ENCODE measurements at regions of chr6 and their contacts with region 1.

Region 1: GRCh38 chr6:38997128-38997761 is 51.3 kb upstream of the GLP1R start:
- DNase-seq: peak; percentile 30
- H3K4me3 Mint-ChIP-seq: no peak overlapping the region
- H3K27ac Mint-ChIP-seq: no peak overlapping the region
- H3K4me1 Mint-ChIP-seq: no peaks in the 10 kb centered on the region
- H3K27me3 Mint-ChIP-seq: peaks cover 39% of the 10 kb centered on the region
- CTCF ChIP-seq: peak; percentile 29

Region 2: GRCh38 chr6:38901802-38902522 is 95.3 kb before region 1 on chr6:
- CTCF ChIA-PET with region 1: interaction called, 10 read pairs
- POLR2A ChIA-PET with region 1: no interaction called
- intact Hi-C with region 1: no loop called
- DNase-seq: no peak
- H3K4me3 Mint-ChIP-seq: no peak overlapping the region
- H3K27ac Mint-ChIP-seq: no peak overlapping the region
- H3K4me1 Mint-ChIP-seq: no peaks in the 10 kb centered on the region
- H3K27me3 Mint-ChIP-seq: no peaks in the 10 kb centered on the region
- CTCF ChIP-seq: no peak

Region 3: GRCh38 chr6:39008737-39009136 is 11.5 kb after region 1 on chr6:
- CTCF ChIA-PET with region 1: no interaction called
- POLR2A ChIA-PET with region 1: no interaction called
- intact Hi-C with region 1: no loop called
- DNase-seq: no peak
- H3K4me3 Mint-ChIP-seq: no peak overlapping the region
- H3K27ac Mint-ChIP-seq: no peak overlapping the region
- H3K4me1 Mint-ChIP-seq: no peaks in the 10 kb centered on the region
- H3K27me3 Mint-ChIP-seq: peaks cover 86% of the 10 kb centered on the region
- CTCF ChIP-seq: no peak